Left colon (tissue), 2 donors: ENCODE measurements at regions of chrX and their contacts with region 1.

Region 1: GRCh38 chrX:115330498-115331168 is 41.1 kb downstream of the LUZP4 start:
- DNase-seq: peak in 1 of 2 donors; percentile 25
- ATAC-seq: peak; percentile 55

Region 2: DNA sequence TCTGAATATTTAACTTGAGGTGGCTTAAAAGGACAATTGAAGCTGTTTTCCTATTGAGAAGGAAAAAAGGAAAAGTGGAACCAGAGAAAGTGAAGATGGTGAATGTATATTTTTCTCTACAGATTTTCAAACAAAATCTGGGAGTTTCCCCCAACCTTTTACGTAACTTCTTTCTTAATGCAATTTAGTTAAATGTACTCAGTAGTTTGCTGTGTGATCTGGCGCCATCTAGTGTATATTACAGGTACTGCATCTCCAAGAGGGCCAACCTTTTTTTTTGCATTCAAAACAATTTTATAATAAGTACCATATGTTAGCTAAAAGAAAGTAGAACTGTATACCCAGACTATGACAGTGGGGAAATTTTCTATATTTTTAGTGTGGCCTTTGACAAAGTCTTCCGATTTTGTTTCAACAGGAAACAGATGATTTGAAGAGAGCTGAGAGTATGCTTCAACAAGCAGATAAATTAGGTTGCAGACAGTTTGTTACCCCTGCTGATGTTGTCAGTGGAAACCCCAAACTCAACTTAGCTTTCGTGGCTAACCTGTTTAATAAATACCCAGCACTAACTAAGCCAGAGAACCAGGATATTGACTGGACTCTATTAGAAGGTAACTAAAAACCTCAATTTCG is 312.4 kb after region 1 on chrX:
- intact Hi-C with region 1: loop called in 1 of 2 experiments (anchors 2 kb)
- DNase-seq: peak in 1 of 2 donors; percentile 16
- ATAC-seq: peak; percentile 28